ENCODE measurements at regions of chr17 and their contacts with region 1.

Region 1: GRCh38 chr17:68539548-68540467 is 27.6 kb downstream of the PRKAR1A start:
- DNase-seq: no peak
- CTCF ChIP-seq: peak; percentile 33

Region 2: GRCh38 chr17:68457539-68458259 is 82.1 kb before region 1 on chr17:
- in situ Hi-C with region 1: no loop called
- DNase-seq: peak; percentile 98
- CTCF ChIP-seq: no peak

Region 3: GRCh38 chr17:69235338-69235930 is 695.6 kb after region 1 on chr17:
- in situ Hi-C with region 1: loop called (anchors 25 kb)
- DNase-seq: peak; percentile 36
- CTCF ChIP-seq: peak; percentile 49

Measured in GM13976 (cell line).